ENCODE measurements at regions of chr5 and their contacts with region 1.

Region 1: GRCh38 chr5:126676195-126676624 is 75.5 kb downstream of the PHAX start:
- DNase-seq: peak; percentile 68
- ATAC-seq: peak; percentile 71
- H3K4me3 ChIP-seq: no peak overlapping the region
- H3K27ac ChIP-seq: no peak overlapping the region
- H3K4me1 ChIP-seq: peaks cover 2% of the 10 kb centered on the region; the same call in 1 of the 2 replicates
- H3K27me3 ChIP-seq: no peaks in the 10 kb centered on the region
- CTCF ChIP-seq: peak; percentile 75 to 94 (median 82)
- EP300 ChIP-seq: no peak
- POLR2A ChIP-seq: no peak
- RAD21 ChIP-seq: peak; percentile 98

Region 2: DNA sequence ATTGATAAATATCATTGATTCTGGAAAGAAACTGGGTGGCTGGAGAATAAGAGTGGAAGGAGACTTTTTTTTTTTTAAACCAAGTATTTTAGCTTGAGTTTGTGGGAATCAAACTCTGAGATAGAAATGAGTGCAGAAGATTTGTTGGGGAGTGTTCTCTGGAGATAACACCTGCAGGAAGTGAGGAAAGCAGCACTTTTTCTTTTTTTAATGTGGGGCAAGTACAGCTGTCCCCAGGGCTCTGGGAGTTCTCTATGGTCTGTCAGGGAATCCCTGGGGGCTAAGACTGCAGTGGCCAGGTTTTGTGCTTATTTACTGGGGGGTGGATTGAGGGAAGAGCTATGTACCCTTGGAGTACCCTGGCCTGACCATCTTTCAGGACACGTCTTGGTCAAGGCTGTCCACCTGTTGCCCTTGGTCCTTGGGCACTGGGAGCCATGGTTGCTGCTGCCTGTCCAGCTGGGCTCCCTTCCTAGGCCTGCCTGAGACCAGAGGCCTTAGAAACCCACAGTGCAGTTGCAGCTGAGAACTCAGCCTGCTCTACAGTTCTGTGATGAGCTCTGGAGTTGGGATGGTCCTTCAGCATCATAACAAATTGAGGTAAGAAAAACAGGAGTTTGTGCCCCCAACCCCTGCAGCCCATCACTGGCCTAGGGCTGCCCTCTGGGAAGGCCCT is 10.4 kb after region 1 on chr5:
- CTCF ChIA-PET with region 1: interaction called, 10 read pairs
- POLR2A ChIA-PET with region 1: interaction called, 5 read pairs
- RAD21 ChIA-PET with region 1: interaction called, 3 read pairs
- SMC1A ChIA-PET with region 1: interaction called, 19 read pairs
- in situ Hi-C with region 1: no loop called
- intact Hi-C with region 1: no loop called
- DNase-seq: peak; percentile 15
- ATAC-seq: peak; percentile 68
- H3K4me3 ChIP-seq: no peak overlapping the region
- H3K27ac ChIP-seq: no peak overlapping the region
- H3K4me1 ChIP-seq: peaks cover 9% of the 10 kb centered on the region
- H3K27me3 ChIP-seq: no peaks in the 10 kb centered on the region
- CTCF ChIP-seq: no peak
- EP300 ChIP-seq: peak in 1 of 2 experiments; percentile 32; a peak in 1 of 4 replicates
- POLR2A ChIP-seq: no peak
- RAD21 ChIP-seq: no peak

Region 3: GRCh38 chr5:126736141-126736540 is 59.9 kb after region 1 on chr5:
- CTCF ChIA-PET with region 1: interaction called, 3 read pairs
- POLR2A ChIA-PET with region 1: interaction called, 3 read pairs
- RAD21 ChIA-PET with region 1: interaction called, 11 read pairs
- SMC1A ChIA-PET with region 1: interaction called, 45 read pairs
- in situ Hi-C with region 1: no loop called
- intact Hi-C with region 1: loop called (anchors 2 kb)
- DNase-seq: no peak
- ATAC-seq: peak; percentile 28; the same call in 2 of the 3 replicates
- H3K4me3 ChIP-seq: no peak overlapping the region
- H3K27ac ChIP-seq: no peak overlapping the region
- H3K4me1 ChIP-seq: 0 out of 2 replicates have a peak, but pooled peaks cover 6% of the 10 kb centered on the region
- H3K27me3 ChIP-seq: no peaks in the 10 kb centered on the region
- CTCF ChIP-seq: no peak
- EP300 ChIP-seq: no peak
- POLR2A ChIP-seq: no peak
- RAD21 ChIP-seq: no peak

Region 4: GRCh38 chr5:126753227-126753626 is 77.0 kb after region 1 on chr5:
- CTCF ChIA-PET with region 1: interaction called, 8 read pairs
- POLR2A ChIA-PET with region 1: interaction called, 6 read pairs
- RAD21 ChIA-PET with region 1: interaction called, 14 read pairs
- SMC1A ChIA-PET with region 1: interaction called, 10 read pairs
- in situ Hi-C with region 1: no loop called
- intact Hi-C with region 1: no loop called
- DNase-seq: no peak
- ATAC-seq: no peak
- H3K4me3 ChIP-seq: no peak overlapping the region
- H3K27ac ChIP-seq: no peak overlapping the region
- H3K4me1 ChIP-seq: peaks cover 14% of the 10 kb centered on the region
- H3K27me3 ChIP-seq: no peaks in the 10 kb centered on the region
- CTCF ChIP-seq: no peak
- EP300 ChIP-seq: no peak
- POLR2A ChIP-seq: no peak
- RAD21 ChIP-seq: no peak

Region 5: DNA sequence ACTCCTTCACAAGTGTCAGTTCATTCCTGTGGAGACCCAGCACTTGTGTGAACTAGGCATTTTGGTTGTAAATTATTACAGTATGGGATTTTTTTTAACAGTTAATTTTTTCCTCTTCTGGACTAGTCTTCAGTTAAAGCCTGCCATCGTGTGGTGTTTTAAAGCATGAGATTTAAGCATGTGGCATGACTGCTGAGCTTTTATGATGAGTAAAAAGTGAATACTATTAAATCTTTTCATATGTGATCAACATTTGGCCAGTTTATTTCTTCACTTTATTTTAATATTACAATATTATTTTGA is 125.7 kb after region 1 on chr5:
- CTCF ChIA-PET with region 1: interaction called, 108 read pairs
- POLR2A ChIA-PET with region 1: interaction called, 3 read pairs
- RAD21 ChIA-PET with region 1: interaction called, 26 read pairs
- SMC1A ChIA-PET with region 1: interaction called, 44 read pairs
- in situ Hi-C with region 1: no loop called
- intact Hi-C with region 1: loop called (anchors 1 kb)
- DNase-seq: no peak
- ATAC-seq: peak; percentile 68
- H3K4me3 ChIP-seq: no peak overlapping the region
- H3K27ac ChIP-seq: no peak overlapping the region
- H3K4me1 ChIP-seq: peaks cover 7% of the 10 kb centered on the region; the same call in 1 of the 2 replicates
- H3K27me3 ChIP-seq: no peaks in the 10 kb centered on the region
- CTCF ChIP-seq: peak; percentile 39 to 66 (median 49); a peak in 4 of 6 replicates
- EP300 ChIP-seq: no peak
- POLR2A ChIP-seq: no peak
- RAD21 ChIP-seq: peak; percentile 73

Region 6: DNA sequence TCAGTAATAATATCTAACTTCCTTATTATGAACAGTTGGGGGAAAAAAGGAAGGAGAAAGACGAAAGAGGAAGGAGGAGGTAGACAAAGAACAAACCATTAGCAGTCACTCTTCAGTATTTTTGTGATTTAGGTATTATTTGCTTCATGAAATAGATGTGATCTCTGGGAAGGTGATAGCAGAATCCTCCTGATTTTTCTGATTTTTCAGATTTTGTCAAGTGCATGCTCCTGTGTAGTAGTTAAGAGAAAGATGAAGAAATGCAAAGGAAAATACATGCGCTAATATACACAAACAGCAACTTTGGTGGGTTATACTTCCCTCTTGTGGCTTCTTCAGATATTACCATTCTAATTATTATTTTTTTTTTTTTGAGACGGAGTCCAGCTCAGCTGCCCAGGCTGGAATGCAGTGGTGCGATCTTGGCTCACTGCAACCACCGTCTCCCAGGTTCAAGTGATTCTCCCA is 132.3 kb after region 1 on chr5:
- CTCF ChIA-PET with region 1: interaction called, 108 read pairs
- POLR2A ChIA-PET with region 1: interaction called, 3 read pairs
- RAD21 ChIA-PET with region 1: interaction called, 26 read pairs
- SMC1A ChIA-PET with region 1: interaction called, 44 read pairs
- in situ Hi-C with region 1: no loop called
- intact Hi-C with region 1: no loop called
- DNase-seq: no peak
- ATAC-seq: peak; percentile 68
- H3K4me3 ChIP-seq: no peak overlapping the region
- H3K27ac ChIP-seq: no peak overlapping the region; the same call in 1 of the 2 replicates
- H3K4me1 ChIP-seq: no peaks in the 10 kb centered on the region
- H3K27me3 ChIP-seq: no peaks in the 10 kb centered on the region
- CTCF ChIP-seq: peak; percentile 29 to 41 (median 40); a peak in 4 of 6 replicates
- EP300 ChIP-seq: no peak
- POLR2A ChIP-seq: no peak
- RAD21 ChIP-seq: peak; percentile 66